ENCODE measurements at regions of chr12 and their contacts with region 1.

Region 1: DNA sequence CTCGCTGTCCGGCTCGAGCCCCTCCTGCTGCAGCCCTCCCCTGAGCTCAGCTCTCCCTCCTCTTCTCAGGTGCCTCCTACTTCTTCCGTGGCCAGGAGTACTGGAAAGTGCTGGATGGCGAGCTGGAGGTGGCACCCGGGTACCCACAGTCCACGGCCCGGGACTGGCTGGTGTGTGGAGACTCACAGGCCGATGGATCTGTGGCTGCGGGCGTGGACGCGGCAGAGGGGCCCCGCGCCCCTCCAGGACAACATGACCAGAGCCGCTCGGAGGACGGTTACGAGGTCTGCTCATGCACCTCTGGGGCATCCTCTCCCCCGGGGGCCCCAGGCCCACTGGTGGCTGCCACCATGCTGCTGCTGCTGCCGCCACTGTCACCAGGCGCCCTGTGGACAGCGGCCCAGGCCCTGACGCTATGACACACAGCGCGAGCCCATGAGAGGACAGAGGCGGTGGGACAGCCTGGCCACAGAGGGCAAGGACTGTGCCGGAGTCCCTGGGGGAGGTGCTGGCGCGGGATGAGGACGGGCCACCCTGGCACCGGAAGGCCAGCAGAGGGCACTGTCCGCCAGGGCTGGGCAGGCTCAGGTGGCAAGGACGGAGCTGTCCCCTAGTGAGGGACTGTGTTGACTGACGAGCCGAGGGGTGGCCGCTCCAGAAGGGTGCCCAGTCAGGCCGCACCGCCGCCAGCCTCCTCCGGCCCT is 22.8 kb downstream of the MMP17 start:
- DNase-seq: peak; percentile 91

Region 2: DNA sequence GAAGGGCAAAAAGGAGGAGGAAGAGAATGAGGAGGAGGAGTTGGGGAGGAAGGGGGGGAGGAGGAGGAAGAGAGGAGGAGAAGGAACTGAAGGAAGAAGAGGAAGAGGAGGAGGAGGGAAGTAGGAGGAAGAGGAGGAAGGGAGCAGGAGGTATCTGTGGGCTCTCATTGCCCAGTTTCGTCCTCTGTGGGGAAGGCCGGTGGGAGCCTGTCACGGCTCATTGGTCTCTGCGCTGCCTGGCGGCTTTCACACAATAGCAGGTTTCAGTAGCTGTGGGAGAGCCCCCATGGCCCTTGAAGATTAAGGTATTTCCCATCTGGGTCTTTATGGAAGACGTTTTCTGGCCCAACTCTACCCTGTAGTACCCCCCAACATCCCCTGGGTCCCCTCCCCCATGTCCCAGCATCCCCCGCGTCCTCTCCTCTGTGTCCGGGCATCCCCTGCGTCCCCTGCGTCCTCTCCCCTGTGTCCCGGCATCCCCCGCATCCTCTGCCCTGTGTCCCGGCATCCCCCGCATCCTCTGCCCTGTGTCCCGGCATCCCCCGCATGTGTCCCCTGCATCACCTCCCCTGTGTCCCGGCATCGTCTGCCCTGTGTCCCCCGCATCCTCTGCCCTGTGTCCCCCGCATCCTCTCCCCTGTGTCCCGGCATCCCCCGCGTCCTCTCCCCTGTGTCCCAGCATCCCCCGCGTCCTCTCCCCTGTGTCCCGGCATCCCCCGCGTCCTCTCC is 418.3 kb before region 1 on chr12:
- intact Hi-C with region 1: no loop called
- DNase-seq: peak; percentile 43

Region 3: DNA sequence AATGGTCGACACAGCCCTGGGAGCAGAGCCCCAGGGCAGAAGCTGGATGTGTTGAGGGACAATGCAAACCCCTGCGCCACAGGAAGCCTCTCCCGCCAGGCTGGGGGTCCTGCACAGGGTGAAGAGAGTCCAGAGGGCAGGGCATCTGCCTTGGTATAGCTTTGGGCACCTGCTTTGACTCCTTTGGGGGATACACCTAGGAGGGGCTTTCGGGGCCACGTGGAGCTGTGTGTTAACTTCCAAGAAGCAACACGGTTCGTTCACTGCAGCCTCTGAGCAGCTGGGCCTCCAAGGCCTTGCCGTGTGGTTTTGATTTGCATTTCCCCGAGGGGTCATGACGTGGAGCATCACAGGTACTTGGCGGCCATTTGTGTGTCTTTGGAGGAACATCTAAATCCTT is 72.3 kb after region 1 on chr12:
- intact Hi-C with region 1: loop called (anchors 5 kb)
- DNase-seq: no peak

Region 4: GRCh38 chr12:131949431-131950181 is 98.6 kb after region 1 on chr12 and contains the start of gene EP400:
- intact Hi-C with region 1: loop called (anchors 1 kb)
- DNase-seq: peak; percentile 97
- total RNA-seq, gene EP400: 23.1 TPM

Region 5: GRCh38 chr12:132000286-132000872 is 149.4 kb after region 1 on chr12:
- intact Hi-C with region 1: loop called (anchors 2 kb)
- DNase-seq: no peak

Measured in cardiac septum (tissue), 1 donor.